PC-9 (cell line): ENCODE measurements at regions of chr6 and their contacts with region 1.

Region 1: GRCh38 chr6:40907198-40907704 is 131.8 kb downstream of the UNC5CL start:
- DNase-seq: peak; percentile 85
- H3K4me3 ChIP-seq: no peak overlapping the region
- H3K27ac ChIP-seq: peak overlapping the region; percentile 67
- H3K4me1 ChIP-seq: peaks cover 27% of the 10 kb centered on the region
- H3K27me3 ChIP-seq: no peaks in the 10 kb centered on the region
- CTCF ChIP-seq: no peak

Region 2: GRCh38 chr6:40042242-40042641 is 865.0 kb before region 1 on chr6:
- CTCF ChIA-PET with region 1: no interaction called
- POLR2A ChIA-PET with region 1: no interaction called
- intact Hi-C with region 1: no loop called
- DNase-seq: no peak
- H3K4me3 ChIP-seq: no peak overlapping the region
- H3K27ac ChIP-seq: no peak overlapping the region
- H3K4me1 ChIP-seq: no peaks in the 10 kb centered on the region
- H3K27me3 ChIP-seq: 0 out of 2 replicates have a peak, but pooled peaks cover 6% of the 10 kb centered on the region
- CTCF ChIP-seq: no peak

Region 3: GRCh38 chr6:40672097-40672496 is 235.2 kb before region 1 on chr6:
- CTCF ChIA-PET with region 1: no interaction called
- POLR2A ChIA-PET with region 1: no interaction called
- intact Hi-C with region 1: no loop called
- DNase-seq: no peak
- H3K4me3 ChIP-seq: no peak overlapping the region
- H3K27ac ChIP-seq: no peak overlapping the region
- H3K4me1 ChIP-seq: no peaks in the 10 kb centered on the region
- H3K27me3 ChIP-seq: peaks cover 53% of the 10 kb centered on the region
- CTCF ChIP-seq: no peak

Region 4: GRCh38 chr6:40762981-40763380 is 144.3 kb before region 1 on chr6:
- CTCF ChIA-PET with region 1: no interaction called
- POLR2A ChIA-PET with region 1: no interaction called
- intact Hi-C with region 1: no loop called
- DNase-seq: no peak
- H3K4me3 ChIP-seq: no peak overlapping the region
- H3K27ac ChIP-seq: no peak overlapping the region
- H3K4me1 ChIP-seq: no peaks in the 10 kb centered on the region
- H3K27me3 ChIP-seq: peaks cover 40% of the 10 kb centered on the region; the same call in 1 of the 2 replicates
- CTCF ChIP-seq: no peak

Region 5: GRCh38 chr6:40950986-40951698 is 43.9 kb after region 1 on chr6:
- CTCF ChIA-PET with region 1: no interaction called
- POLR2A ChIA-PET with region 1: no interaction called
- intact Hi-C with region 1: loop called (anchors 5 kb)
- DNase-seq: peak; percentile 40 to 48
- H3K4me3 ChIP-seq: 0 out of 2 replicates have a peak overlapping the region, but pooled peaks have one; percentile 9
- H3K27ac ChIP-seq: 0 out of 2 replicates have a peak overlapping the region, but pooled peaks have one; percentile 9
- H3K4me1 ChIP-seq: peaks cover 15% of the 10 kb centered on the region
- H3K27me3 ChIP-seq: no peaks in the 10 kb centered on the region
- CTCF ChIP-seq: no peak

Region 6: DNA sequence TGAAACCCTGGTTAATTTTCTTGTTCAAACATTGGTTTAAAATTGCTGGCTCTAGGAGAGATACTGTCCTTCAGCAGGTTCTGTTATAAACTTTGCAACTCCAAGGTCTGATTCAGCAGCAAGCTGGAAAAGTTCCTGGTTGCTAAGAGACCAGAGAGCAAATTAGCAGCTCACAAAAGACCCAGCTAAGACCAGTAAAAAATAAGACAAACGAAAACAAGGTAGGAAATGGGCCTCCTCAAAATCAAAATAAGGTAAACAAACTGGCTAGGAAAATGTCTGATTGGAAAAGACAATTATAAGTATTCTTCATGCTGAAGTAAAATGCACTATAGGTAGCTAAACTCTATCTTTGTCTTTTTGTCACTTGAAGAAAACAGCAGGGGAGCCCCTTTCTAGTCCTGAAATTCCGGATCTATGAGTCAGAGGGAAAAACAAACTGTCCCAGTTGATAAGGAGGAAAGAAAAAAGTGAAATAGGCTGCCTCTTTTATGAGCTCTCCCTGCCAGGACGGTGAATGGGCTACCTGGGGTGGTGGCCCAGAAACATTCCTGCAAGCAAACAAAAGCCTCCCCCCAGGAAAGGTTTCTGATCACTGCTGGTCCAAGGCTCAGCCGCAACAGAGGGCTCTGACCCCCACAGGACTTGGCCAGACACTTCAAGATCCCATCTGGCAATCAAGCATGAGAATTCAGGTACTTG is 90.2 kb after region 1 on chr6:
- CTCF ChIA-PET with region 1: interaction called, 5 read pairs
- POLR2A ChIA-PET with region 1: no interaction called
- intact Hi-C with region 1: loop called (anchors 2 kb)
- DNase-seq: peak; percentile 72 to 89
- H3K4me3 ChIP-seq: no peak overlapping the region
- H3K27ac ChIP-seq: peak overlapping the region; percentile 49
- H3K4me1 ChIP-seq: peaks cover 30% of the 10 kb centered on the region
- H3K27me3 ChIP-seq: 0 out of 2 replicates have a peak, but pooled peaks cover under 1% of the 10 kb centered on the region
- CTCF ChIP-seq: no peak

Region 7: DNA sequence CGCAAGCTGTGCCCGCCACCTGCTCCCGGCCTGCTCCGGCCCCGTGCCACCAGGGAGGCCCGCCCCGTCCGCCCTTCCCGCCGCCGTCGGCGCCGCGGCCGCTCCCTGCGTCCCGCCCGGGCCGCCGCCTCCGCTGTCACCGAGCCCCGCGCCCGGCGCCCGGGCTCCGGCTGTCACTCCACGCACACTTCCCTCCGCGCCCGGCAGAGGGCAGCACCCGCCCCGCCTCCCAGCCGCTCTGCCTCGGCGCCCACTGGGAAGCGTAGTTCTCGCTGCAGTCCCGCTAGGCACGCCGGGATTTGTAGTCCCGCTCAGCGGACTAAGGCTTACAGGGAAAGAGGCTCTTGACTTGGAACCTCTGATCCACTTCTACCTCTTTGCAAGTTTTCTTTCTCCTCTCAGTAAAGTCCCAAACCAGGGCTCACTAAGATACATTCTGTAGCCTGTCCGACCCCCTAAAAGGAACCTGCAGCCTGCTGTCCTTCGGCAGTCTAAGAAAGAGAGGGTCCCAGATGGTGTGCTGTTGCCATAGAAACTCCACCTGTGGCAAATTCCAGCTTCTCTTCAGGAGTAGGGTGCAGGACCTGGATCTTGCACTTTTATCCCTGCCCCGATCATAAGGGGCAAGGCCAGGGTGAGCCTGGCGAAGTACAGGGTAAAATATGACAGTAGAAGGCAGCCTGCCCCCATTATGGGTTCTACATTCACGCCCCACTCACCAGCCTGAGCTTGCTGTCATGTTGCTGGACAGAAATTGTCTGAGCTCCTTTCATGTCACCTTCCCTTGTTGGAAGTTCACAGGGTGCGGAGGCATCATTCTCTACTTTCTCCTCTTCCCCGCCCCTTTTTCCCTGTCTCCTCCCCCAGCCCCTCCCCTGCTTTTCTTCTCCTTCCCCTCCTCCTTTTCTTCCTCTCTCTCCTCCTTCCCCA is 828.4 kb after region 1 on chr6 and contains the start of gene TFEB:
- CTCF ChIA-PET with region 1: interaction called, 23 read pairs
- POLR2A ChIA-PET with region 1: no interaction called
- intact Hi-C with region 1: no loop called
- DNase-seq: peak; percentile 81 to 94
- H3K4me3 ChIP-seq: peak within 1 kb of the TSS; percentile 57
- H3K27ac ChIP-seq: no peak within 1 kb of the TSS
- H3K4me1 ChIP-seq: peaks cover 24% of the 10 kb centered on the region
- H3K27me3 ChIP-seq: no peaks in the 10 kb centered on the region
- CTCF ChIP-seq: peak; percentile 75
- total RNA-seq, gene TFEB: 7.3 and 8.6 TPM in 2 replicates